Breast epithelium (tissue), 4 donors: ENCODE measurements at regions of chr16 and their contacts with region 1.

Region 1: DNA sequence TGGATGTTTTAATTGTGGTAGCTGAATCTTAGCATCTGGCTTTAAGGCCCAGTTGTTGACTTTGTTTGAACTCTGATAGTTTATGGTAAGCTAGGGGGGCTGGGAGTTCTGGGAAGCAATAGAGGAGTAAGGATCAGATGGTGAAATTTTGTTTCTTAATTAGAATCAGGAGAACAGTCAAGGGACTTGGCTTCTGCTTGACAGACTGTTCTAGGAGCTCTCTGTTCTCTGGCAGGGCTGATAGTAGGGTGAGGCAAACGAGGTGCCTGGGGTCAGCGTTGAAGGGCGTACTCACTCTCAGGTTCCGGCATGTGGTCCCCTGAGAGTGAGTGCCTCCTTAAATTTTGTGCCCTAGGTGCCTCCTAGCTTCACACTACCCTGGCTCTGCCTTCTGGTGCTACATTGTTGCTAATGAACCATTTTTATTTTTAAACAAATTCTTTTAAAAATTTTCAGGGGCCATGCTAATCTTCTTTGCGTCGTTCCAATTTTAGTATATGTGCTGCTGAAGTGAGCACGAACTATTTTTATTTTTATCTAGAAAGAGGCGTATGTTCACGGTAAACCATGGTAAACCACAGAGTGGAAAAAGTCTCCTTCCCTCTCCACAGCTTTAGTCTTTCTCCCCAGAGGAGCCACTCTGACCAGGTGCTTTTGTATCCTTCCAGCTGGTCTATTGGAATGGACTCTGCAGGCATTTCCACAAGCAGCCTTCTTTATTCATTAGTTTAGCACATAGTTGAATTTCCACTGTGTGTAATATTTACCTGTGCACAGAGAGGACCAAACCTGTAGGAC is 19.7 kb downstream of the SLC7A6 start:
- DNase-seq: no peak
- H3K4me3 ChIP-seq: no peak overlapping the region
- H3K27ac ChIP-seq: peak overlapping the region; percentile 65 to 91
- H3K4me1 ChIP-seq: peaks cover 0 to 13% of the 10 kb centered on the region in 2 donors
- H3K27me3 ChIP-seq: no peaks in the 10 kb centered on the region
- CTCF ChIP-seq: no peak
- POLR2A ChIP-seq: no peak

Region 2: GRCh38 chr16:68146585-68146984 is 137.4 kb before region 1 on chr16:
- intact Hi-C with region 1: no loop called
- DNase-seq: no peak
- H3K4me3 ChIP-seq: no peak overlapping the region
- H3K27ac ChIP-seq: no peak overlapping the region
- H3K4me1 ChIP-seq: no peaks in the 10 kb centered on the region
- H3K27me3 ChIP-seq: no peaks in the 10 kb centered on the region
- CTCF ChIP-seq: no peak
- POLR2A ChIP-seq: no peak

Region 3: DNA sequence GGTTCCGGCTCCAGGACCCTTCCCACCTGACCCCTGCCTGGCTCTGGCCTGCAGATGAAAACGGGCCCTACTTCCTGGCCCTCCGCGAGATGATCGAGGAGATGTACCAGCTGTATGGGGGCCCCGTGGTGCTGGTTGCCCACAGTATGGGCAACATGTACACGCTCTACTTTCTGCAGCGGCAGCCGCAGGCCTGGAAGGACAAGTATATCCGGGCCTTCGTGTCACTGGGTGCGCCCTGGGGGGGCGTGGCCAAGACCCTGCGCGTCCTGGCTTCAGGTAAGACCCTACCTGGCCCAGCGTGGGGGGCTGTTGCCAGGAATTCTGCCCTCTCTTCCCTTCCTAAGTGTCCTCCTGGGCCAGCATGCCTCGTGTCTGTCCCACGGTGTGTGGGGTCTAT is 28.3 kb before region 1 on chr16:
- intact Hi-C with region 1: loop called (anchors 1 kb)
- DNase-seq: no peak
- H3K4me3 ChIP-seq: no peak overlapping the region
- H3K27ac ChIP-seq: no peak overlapping the region
- H3K4me1 ChIP-seq: no peaks in the 10 kb centered on the region
- H3K27me3 ChIP-seq: no peaks in the 10 kb centered on the region
- CTCF ChIP-seq: no peak
- POLR2A ChIP-seq: no peak